ENCODE measurements at regions of chr10 and their contacts with region 1.

Region 1: DNA sequence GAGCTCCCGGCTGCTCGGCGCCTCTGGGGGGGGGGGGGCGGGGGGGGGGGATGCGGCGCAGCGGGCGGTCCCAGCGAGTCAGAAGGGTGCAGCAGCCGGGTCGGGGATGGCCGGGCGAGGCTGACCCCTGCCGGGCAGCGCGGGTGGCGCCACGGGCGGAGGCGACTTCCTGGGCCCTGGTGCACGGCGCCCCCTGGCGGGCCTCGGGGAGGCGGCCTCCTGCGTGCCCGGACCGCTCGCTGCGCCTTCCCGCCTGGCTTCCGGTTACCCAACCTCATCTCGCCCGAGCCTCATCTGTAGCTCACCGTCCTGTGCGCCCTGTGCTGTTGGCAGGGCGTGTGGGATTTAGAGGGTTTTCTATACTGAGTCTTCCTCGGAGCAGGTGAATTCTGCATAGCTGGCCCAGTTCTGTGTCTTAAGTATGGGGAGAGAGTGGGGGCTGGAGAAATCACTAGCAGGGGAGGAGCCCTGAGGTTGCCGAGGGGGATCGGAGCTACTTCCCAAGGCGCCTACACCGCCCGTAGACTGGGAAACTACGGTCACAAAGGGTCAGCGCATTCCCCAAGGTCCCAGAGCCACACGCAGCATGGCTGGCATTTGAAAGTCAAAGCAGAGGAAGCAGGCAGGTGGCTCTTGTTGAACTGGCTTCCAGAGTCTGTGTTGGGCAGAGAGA is 28.3 kb upstream of the WDFY4 start:
- DNase-seq: peak; percentile 85
- H3K4me3 ChIP-seq: peak overlapping the region; percentile 31 to 43
- H3K27ac ChIP-seq: no peak overlapping the region
- H3K4me1 ChIP-seq: peaks cover 6% of the 10 kb centered on the region
- H3K27me3 ChIP-seq: no peaks in the 10 kb centered on the region
- CTCF ChIP-seq: peak; percentile 96 to 100 (median 98)
- POLR2A ChIP-seq: no peak

Region 2: GRCh38 chr10:48363617-48364355 is 292.6 kb before region 1 on chr10:
- intact Hi-C with region 1: loop called (anchors 2 kb)
- DNase-seq: peak; percentile 32
- H3K4me3 ChIP-seq: no peak overlapping the region
- H3K27ac ChIP-seq: no peak overlapping the region
- H3K4me1 ChIP-seq: no peaks in the 10 kb centered on the region
- H3K27me3 ChIP-seq: no peaks in the 10 kb centered on the region
- CTCF ChIP-seq: peak in 3 of 4 experiments; percentile 60 to 84 (median 73)
- POLR2A ChIP-seq: no peak

Region 3: GRCh38 chr10:48551861-48552591 is 104.4 kb before region 1 on chr10:
- intact Hi-C with region 1: loop called (anchors 2 kb)
- DNase-seq: no peak
- H3K4me3 ChIP-seq: no peak overlapping the region
- H3K27ac ChIP-seq: no peak overlapping the region
- H3K4me1 ChIP-seq: no peaks in the 10 kb centered on the region
- H3K27me3 ChIP-seq: no peaks in the 10 kb centered on the region
- CTCF ChIP-seq: peak in 2 of 4 experiments; percentile 57 to 65
- POLR2A ChIP-seq: no peak

Region 4: DNA sequence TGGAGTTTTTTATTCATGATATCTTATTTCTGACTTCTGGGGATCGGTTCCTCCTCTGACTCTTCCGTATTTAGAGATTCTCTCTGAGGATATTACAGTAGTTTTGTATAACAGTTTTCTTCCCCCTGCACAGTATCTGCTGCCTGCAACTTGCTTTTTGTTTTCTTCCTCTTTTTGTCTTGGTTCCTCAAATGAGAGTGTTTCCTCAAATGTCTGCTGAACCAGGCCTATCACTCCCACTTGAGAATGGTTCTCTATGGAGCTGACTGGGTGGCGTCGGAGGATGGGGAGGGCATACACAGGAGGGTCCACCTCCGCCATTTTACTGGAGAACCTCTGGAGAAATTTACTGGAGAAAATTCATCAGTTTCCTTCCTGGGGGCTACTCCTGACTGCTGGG is 79.2 kb before region 1 on chr10:
- intact Hi-C with region 1: no loop called
- DNase-seq: no peak
- H3K4me3 ChIP-seq: no peak overlapping the region
- H3K27ac ChIP-seq: no peak overlapping the region
- H3K4me1 ChIP-seq: no peaks in the 10 kb centered on the region
- H3K27me3 ChIP-seq: no peaks in the 10 kb centered on the region
- CTCF ChIP-seq: no peak
- POLR2A ChIP-seq: no peak

Region 5: DNA sequence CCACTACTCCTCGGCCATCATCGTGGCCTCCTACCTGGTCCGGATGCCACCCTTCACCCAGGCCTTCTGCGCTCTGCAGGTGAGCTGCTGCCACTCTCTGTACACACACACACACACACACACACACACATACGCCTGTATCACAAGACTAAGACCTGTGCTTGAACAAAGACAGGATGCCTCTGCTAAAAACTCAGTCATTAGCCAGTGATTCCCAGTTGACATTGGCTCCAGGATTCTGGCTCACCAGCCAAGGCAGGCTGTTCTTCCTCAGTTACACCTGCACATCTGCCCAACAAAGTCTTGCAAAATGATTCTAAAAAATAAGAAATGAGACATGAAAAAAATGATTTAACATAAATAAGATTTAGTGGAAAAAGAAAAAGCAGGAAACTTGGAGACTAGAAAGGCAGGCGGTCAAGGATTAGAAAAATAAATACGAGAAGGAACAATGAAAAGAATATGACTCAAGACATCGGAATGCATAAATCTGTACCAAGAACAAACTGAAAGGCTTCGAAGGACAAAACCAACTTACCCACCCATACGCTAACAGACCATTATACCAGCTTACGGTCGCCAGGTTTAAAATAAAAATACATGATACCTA is 290.6 kb after region 1 on chr10:
- intact Hi-C with region 1: no loop called
- DNase-seq: no peak
- H3K4me3 ChIP-seq: no peak overlapping the region
- H3K27ac ChIP-seq: no peak overlapping the region
- H3K4me1 ChIP-seq: no peaks in the 10 kb centered on the region
- H3K27me3 ChIP-seq: no peaks in the 10 kb centered on the region
- CTCF ChIP-seq: no peak
- POLR2A ChIP-seq: no peak

Region 6: GRCh38 chr10:49001402-49001801 is 345.0 kb after region 1 on chr10:
- intact Hi-C with region 1: no loop called
- DNase-seq: no peak
- H3K4me3 ChIP-seq: no peak overlapping the region
- H3K27ac ChIP-seq: no peak overlapping the region
- H3K4me1 ChIP-seq: no peaks in the 10 kb centered on the region
- H3K27me3 ChIP-seq: no peaks in the 10 kb centered on the region
- CTCF ChIP-seq: no peak
- POLR2A ChIP-seq: no peak

Region 7: GRCh38 chr10:49109669-49110340 is 453.4 kb after region 1 on chr10:
- intact Hi-C with region 1: loop called (anchors 5 kb)
- DNase-seq: no peak
- H3K4me3 ChIP-seq: no peak overlapping the region
- H3K27ac ChIP-seq: no peak overlapping the region
- H3K4me1 ChIP-seq: peaks cover 8% of the 10 kb centered on the region
- H3K27me3 ChIP-seq: no peaks in the 10 kb centered on the region
- CTCF ChIP-seq: no peak
- POLR2A ChIP-seq: no peak

Region 8: GRCh38 chr10:49164559-49165188 is 508.3 kb after region 1 on chr10:
- intact Hi-C with region 1: loop called (anchors 10 kb)
- DNase-seq: no peak
- H3K4me3 ChIP-seq: no peak overlapping the region
- H3K27ac ChIP-seq: no peak overlapping the region
- H3K4me1 ChIP-seq: no peaks in the 10 kb centered on the region
- H3K27me3 ChIP-seq: no peaks in the 10 kb centered on the region
- CTCF ChIP-seq: peak in 3 of 4 experiments; percentile 21 to 60 (median 52)
- POLR2A ChIP-seq: no peak

Region 9: DNA sequence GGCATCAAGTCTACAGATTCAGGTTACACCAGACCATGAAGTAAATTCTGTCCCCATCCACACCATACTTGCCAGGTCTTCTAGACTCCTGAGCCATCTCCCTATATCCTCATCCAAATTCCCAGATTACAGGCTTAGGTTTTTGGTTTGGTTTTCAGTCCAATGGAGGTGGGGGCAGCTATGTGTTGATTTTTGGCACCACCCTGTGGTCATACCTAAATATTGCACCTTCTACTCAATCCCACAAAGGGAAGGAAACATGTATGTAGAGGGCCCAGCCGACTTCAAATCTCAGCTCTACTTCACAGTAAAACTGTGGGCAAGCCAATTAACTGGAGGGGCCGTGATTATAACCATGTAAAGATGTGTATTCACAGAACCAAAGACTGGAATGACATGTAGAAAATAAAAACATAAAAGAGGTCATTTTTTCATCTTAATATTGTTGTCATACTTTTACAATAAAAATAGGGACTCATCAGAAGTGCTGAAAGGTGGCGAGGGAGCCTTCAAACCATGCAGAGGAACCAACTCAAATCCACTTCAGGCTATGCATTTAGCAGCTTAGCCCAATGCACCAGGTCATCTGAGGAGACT is 862.7 kb after region 1 on chr10:
- intact Hi-C with region 1: loop called (anchors 5 kb)
- DNase-seq: peak; percentile 33
- H3K4me3 ChIP-seq: no peak overlapping the region
- H3K27ac ChIP-seq: no peak overlapping the region
- H3K4me1 ChIP-seq: no peaks in the 10 kb centered on the region
- H3K27me3 ChIP-seq: no peaks in the 10 kb centered on the region
- CTCF ChIP-seq: peak; percentile 27 to 76 (median 63)
- POLR2A ChIP-seq: no peak